A673 (cell line): ENCODE measurements at regions of chr5 and their contacts with region 1.

Region 1: GRCh38 chr5:20213803-20214202 is 225.8 kb upstream of the CDH18 start:
- DNase-seq: no peak
- H3K4me3 ChIP-seq: no peak overlapping the region
- H3K27ac ChIP-seq: no peak overlapping the region
- H3K4me1 ChIP-seq: no peaks in the 10 kb centered on the region
- H3K27me3 ChIP-seq: no peaks in the 10 kb centered on the region
- CTCF ChIP-seq: no peak

Region 2: DNA sequence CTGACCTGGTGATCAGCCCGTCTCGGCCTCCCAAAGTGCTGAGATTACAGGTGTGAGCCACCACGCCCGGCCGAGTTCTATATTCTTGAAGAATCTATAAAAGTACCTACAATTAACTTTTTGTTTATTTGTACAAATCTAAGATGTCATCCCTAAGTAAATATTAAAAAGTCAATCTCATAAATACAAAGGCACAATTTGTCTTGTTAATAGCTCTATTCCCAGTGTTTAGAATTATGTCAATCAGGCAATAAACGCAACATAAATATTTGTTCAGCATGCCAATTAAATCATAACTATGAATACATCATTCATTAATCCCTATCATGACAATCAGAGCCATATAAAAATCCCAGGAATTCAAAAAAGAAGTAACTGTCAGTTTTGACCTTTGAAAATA is 156.9 kb before region 1 on chr5:
- CTCF ChIA-PET with region 1: interaction called, 10 read pairs
- POLR2A ChIA-PET with region 1: no interaction called
- intact Hi-C with region 1: no loop called
- DNase-seq: no peak
- H3K4me3 ChIP-seq: no peak overlapping the region
- H3K27ac ChIP-seq: no peak overlapping the region
- H3K4me1 ChIP-seq: no peaks in the 10 kb centered on the region
- H3K27me3 ChIP-seq: no peaks in the 10 kb centered on the region
- CTCF ChIP-seq: no peak